IMR-90 (cell line): ENCODE measurements at regions of chr1 and their contacts with region 1.

Region 1: DNA sequence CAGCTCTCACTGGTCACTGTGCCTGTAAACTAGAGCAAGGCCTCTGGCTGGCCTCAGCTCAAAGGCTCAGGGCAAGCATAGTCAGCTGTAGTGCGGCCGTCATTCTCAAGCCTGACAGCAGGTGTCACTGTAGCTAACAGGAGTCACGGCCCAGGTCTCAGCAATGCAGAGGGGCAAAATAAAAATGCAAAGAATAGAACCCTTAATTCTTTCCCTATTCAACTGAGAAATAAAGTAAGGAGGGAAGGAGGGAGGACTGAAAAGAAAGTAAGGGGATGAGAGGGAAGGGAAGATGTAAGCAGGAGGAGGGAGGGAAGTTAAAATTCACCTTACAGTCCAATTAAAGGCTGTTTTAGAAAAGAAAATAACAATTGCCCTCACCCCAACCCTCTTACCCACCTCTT is 106.1 kb downstream of the KIAA0319L start:
- DNase-seq: peak; percentile 81
- ATAC-seq: peak; percentile 68
- H3K4me3 ChIP-seq: no peak overlapping the region
- H3K27ac ChIP-seq: peak overlapping the region; percentile 45; the same call in 1 of the 2 replicates
- H3K4me1 ChIP-seq: peaks cover 25% of the 10 kb centered on the region
- H3K27me3 ChIP-seq: no peaks in the 10 kb centered on the region
- CTCF ChIP-seq: peak; percentile 87
- POLR2A ChIP-seq: no peak
- RAD21 ChIP-seq: peak; percentile 83

Region 2: GRCh38 chr1:35539073-35539823 is 88.1 kb after region 1 on chr1:
- CTCF ChIA-PET with region 1: interaction called, 12 read pairs
- POLR2A ChIA-PET with region 1: no interaction called
- dilution Hi-C with region 1: no loop called
- in situ Hi-C with region 1: no loop called
- intact Hi-C with region 1: loop called (anchors 2 kb)
- DNase-seq: no peak
- ATAC-seq: peak; percentile 33
- H3K4me3 ChIP-seq: no peak overlapping the region
- H3K27ac ChIP-seq: peak overlapping the region; percentile 81; the same call in 1 of the 2 replicates
- H3K4me1 ChIP-seq: peaks cover 23% of the 10 kb centered on the region
- H3K27me3 ChIP-seq: no peaks in the 10 kb centered on the region
- CTCF ChIP-seq: no peak
- POLR2A ChIP-seq: no peak
- RAD21 ChIP-seq: no peak

Region 3: DNA sequence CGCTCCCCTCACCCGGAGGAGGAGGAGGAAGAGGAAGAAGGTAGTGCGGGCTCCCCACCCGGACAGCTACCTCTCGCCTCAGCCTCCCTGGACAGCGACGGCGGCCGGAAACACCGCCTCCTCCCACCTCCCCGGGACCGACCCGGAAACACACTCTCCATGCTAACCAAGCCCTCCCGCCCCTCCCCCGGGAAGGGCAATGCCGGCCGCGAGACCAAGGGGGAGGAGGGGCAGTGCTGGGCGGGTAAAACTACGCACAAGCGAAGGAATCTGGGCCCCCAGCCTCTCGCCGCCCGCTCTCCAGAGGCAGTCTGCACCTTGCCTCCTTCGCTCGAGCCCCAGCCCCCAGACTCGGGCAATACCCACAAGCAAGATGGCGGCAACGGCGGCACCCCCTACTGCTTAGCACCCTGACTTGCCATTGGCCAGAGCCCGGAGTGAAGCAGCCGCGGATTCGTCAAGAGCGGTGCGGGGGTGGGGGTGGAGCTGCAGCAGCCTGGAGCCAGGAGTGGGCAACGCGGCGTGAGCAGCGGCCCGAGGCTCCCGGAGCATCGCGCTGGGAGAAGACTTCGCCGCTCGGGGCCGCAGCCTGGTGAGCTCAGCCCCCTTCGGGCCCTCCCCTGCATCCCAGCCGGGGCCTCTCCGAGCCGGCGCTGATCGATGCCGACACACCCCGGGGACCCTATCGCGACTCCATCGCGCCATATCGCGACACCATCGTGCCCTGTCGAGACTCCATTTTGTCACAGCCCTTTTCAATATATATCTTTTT is 106.4 kb after region 1 on chr1 and contains the starts of genes KIAA0319L and NCDN:
- CTCF ChIA-PET with region 1: interaction called, 9 read pairs
- POLR2A ChIA-PET with region 1: interaction called, 4 read pairs
- dilution Hi-C with region 1: no loop called
- in situ Hi-C with region 1: loop called (anchors 5 kb)
- intact Hi-C with region 1: loop called (anchors 1 kb)
- DNase-seq: peak; percentile 97
- ATAC-seq: peak; percentile 88
- H3K4me3 ChIP-seq: peak within 1 kb of the TSS; percentile 79
- H3K27ac ChIP-seq: peak within 1 kb of the TSS; percentile 99
- H3K4me1 ChIP-seq: peaks cover 10% of the 10 kb centered on the region
- H3K27me3 ChIP-seq: no peaks in the 10 kb centered on the region
- CTCF ChIP-seq: no peak
- POLR2A ChIP-seq: peak; percentile 85
- RAD21 ChIP-seq: no peak
- total RNA-seq, gene KIAA0319L: 38.0 and 49.8 TPM in 2 replicates
- total RNA-seq, gene NCDN: 9.7 and 10.0 TPM in 2 replicates

Region 4: DNA sequence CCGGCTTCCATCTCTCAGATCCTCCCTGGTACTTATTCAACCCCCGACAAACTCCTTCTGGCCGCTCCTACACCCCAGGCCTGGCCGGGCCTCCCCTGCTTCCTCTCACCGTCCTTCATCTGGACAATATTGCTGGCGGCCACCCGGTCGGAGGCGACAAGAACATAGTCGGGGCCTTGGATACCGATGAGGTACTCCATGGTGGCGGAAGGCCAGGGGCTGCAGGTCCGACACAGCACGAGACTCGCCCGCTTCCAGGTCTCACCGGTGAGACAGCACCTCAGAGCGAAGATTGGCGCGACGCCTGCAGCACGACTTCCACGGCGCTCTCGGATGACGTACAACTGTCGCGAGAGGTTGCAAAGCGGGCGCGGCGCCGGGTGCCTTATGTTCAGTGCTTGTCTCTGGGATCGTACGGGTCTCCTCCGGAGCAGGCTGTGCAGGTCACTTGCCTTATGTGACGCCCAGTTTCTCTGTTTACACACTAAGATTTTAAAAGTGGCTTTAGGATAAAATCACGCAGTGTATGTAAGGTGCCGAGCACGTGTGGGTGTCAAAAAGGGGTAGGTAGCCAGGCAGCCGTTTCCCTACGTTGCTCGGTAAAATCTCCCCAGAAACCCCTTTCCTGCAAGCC is 190.2 kb after region 1 on chr1 and contains the start of gene PSMB2:
- CTCF ChIA-PET with region 1: no interaction called
- POLR2A ChIA-PET with region 1: no interaction called
- dilution Hi-C with region 1: no loop called
- in situ Hi-C with region 1: no loop called
- intact Hi-C with region 1: loop called (anchors 5 kb)
- DNase-seq: peak; percentile 94
- ATAC-seq: peak; percentile 94
- H3K4me3 ChIP-seq: peak within 1 kb of the TSS; percentile 90
- H3K27ac ChIP-seq: peak within 1 kb of the TSS; percentile 86
- H3K4me1 ChIP-seq: no peaks in the 10 kb centered on the region
- H3K27me3 ChIP-seq: peaks cover 11% of the 10 kb centered on the region
- CTCF ChIP-seq: no peak
- POLR2A ChIP-seq: peak; percentile 83
- RAD21 ChIP-seq: no peak
- total RNA-seq, gene PSMB2: 23.8 and 28.1 TPM in 2 replicates

Region 5: DNA sequence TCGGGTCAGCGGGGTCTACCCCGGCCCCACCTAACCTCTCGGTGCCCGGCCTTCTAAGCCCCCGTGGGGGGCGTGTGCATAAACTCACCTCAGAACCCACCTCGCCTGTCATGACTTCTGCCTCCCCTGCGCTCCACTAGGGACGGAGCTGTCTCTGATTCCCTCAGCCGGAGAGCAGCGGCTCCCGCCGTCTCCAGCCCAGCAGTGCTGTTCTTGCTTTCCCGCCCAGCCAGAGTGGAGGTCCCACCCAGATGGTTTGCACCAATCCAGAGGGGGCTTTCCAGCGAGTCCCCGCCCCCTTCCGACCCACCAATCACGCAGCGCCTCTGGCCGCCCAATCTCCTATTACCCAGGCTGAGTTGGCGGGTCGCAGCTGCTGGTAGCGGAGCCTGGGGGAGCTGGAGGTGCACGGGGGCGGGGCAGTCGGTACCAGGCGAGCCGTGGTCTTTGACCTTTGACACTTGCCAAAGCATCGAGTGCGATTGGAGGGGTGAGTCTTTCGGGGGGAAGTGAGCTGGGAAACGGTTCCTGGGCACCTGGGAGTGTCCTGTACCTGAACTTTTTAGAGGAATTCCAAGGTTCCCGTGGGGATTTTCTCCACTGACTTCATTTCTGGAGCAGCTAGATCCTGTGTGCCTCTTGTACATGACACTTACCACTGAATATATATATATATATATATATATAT is 318.8 kb after region 1 on chr1 and contains the start of gene CLSPN:
- CTCF ChIA-PET with region 1: no interaction called
- POLR2A ChIA-PET with region 1: no interaction called
- dilution Hi-C with region 1: no loop called
- in situ Hi-C with region 1: no loop called
- intact Hi-C with region 1: loop called (anchors 2 kb)
- DNase-seq: peak; percentile 94
- ATAC-seq: peak; percentile 97
- H3K4me3 ChIP-seq: peak within 1 kb of the TSS; percentile 82
- H3K27ac ChIP-seq: peak within 1 kb of the TSS; percentile 88
- H3K4me1 ChIP-seq: peaks cover 2% of the 10 kb centered on the region
- H3K27me3 ChIP-seq: no peaks in the 10 kb centered on the region
- CTCF ChIP-seq: no peak
- POLR2A ChIP-seq: peak; percentile 81; the same call in 1 of the 2 replicates
- RAD21 ChIP-seq: no peak
- total RNA-seq, gene CLSPN: 14.3 and 14.4 TPM in 2 replicates